GM10248 (cell line): ENCODE measurements at regions of chr19 and their contacts with region 1.

Region 1: DNA sequence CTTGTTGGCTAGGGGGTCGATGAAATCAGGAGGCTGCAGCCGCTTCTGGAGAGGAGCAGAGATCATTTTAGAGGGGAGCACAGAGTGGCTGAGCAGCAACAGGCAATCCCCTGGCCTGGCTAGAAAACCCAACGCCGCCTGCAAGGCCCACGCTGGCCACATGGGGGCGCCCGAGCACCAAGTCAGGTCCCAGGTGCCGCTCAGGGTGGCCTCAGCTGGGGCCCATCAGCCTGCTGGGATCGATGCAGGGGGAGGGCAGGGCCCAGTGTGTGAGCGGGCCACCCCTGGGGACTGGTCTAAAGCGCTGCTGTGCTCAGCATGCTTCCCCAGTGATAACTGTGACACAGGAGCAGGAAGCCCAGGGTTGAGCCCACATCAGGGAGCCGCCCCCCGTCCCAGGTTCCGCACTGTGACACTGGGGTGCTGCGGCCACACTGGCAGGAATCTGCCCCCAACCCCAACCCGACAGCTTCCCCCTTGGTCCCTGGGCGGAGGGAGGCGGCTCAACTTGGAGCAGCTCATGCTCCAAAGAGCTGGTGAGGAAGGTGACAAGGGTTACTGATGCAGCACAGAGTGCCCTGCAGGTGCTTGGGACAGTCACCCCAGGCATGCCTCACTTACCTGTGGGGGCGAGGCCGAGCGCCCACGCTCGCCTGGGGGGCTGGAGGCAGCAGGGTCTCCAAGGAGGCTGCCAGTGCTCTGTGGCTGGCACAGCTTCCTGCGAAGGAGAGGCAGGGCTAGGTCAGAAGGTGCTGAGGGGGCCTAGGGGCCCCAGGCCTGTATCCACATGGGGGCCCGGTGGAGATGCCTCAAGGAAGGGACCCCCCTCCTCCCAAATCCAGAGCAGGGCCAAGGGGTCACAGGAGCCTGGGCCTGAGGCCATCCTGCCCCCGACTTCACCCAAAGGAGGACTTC is 13.3 kb upstream of the ISYNA1 start:
- DNase-seq: peak; percentile 91
- CTCF ChIP-seq: peak; percentile 98

Region 2: GRCh38 chr19:18349524-18350128 is 101.6 kb before region 1 on chr19:
- CTCF ChIA-PET with region 1: no interaction called
- POLR2A ChIA-PET with region 1: no interaction called
- DNase-seq: peak; percentile 68
- CTCF ChIP-seq: peak; percentile 67

Region 3: GRCh38 chr19:18401580-18402112 is 49.5 kb before region 1 on chr19:
- CTCF ChIA-PET with region 1: no interaction called
- POLR2A ChIA-PET with region 1: no interaction called
- DNase-seq: peak; percentile 69
- CTCF ChIP-seq: peak; percentile 39

Region 4: GRCh38 chr19:18440415-18440877 is 10.7 kb before region 1 on chr19:
- CTCF ChIA-PET with region 1: interaction called, 20 read pairs
- POLR2A ChIA-PET with region 1: no interaction called
- DNase-seq: peak; percentile 55
- CTCF ChIP-seq: peak; percentile 52

Region 5: GRCh38 chr19:18469069-18469846 is 18.1 kb after region 1 on chr19:
- CTCF ChIA-PET with region 1: interaction called, 15 read pairs
- POLR2A ChIA-PET with region 1: no interaction called
- DNase-seq: peak; percentile 65
- CTCF ChIP-seq: peak; percentile 71

Region 6: DNA sequence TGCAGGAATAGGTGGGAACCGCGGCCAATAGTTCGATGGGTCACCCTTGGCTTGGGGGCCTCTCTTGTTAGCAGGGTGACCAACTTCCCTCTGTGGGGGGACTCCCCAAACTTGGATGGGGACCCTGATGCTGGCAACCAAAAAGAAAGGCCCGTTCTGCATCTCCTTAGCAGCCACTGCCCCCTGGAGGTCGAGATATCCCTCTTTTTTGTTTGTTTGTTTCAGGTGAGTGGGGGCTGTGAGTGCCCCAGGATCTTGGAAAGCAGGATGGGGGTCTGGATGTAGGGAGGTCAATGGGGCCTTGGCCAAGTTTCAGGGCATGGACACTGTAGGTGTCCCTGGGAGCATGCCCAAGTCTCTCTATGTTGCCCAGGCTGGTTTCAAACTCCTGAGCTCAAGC is 224.6 kb after region 1 on chr19:
- CTCF ChIA-PET with region 1: no interaction called
- POLR2A ChIA-PET with region 1: interaction called, 11 read pairs
- DNase-seq: no peak
- CTCF ChIP-seq: peak; percentile 27